Activated CD4-positive, alpha-beta memory T cell treated with anti-CD3 and anti-CD28 coated beads for 36 hours (primary cell): ENCODE measurements at regions of chr6 and their contacts with region 1.

Region 1: DNA sequence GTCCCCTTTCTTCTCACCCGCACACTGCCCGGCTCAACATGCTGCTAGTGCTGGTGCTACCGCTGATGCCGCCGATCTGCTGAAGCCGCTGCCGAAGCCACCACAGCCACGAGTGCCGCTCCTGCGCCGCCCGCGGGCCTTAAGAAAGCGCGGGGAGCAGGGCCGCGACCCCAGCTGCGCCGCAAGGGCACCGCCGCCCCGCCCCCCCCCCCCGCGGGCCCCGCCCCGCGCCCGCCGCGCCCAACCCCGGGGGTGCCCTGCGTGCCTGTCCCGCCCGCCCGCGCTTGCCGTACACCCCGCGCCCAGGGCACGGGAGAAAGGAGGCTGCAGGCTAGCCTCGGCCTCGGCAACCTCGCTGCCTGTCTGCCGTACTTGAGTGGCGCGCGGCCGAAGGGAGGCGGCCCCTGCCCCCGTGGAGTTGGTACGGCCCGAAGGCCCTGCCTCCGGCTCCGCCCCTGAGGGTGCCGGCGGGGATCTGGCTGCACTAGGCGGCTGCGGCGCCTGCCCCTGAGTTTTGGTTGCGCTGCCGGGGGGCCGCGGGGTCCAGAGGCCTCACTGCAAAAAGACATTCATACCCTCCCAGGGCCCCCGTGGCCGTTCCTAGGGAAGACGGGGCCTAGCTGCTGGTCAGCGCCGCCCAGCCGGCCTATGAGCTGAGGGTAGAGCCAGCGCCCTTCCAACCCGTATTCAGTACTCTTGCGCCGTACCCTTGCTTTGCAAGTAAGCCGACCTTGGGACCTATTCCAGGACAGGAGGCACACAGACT is at the start of gene SOD2:
- DNase-seq: peak; percentile 88
- H3K4me3 Mint-ChIP-seq: peak within 1 kb of the TSS; percentile 94
- H3K27ac Mint-ChIP-seq: peak within 1 kb of the TSS; percentile 93
- H3K4me1 Mint-ChIP-seq: peaks cover 38% of the 10 kb centered on the region
- H3K27me3 Mint-ChIP-seq: no peaks in the 10 kb centered on the region
- total RNA-seq, gene SOD2: 103 to 108 TPM

Region 2: DNA sequence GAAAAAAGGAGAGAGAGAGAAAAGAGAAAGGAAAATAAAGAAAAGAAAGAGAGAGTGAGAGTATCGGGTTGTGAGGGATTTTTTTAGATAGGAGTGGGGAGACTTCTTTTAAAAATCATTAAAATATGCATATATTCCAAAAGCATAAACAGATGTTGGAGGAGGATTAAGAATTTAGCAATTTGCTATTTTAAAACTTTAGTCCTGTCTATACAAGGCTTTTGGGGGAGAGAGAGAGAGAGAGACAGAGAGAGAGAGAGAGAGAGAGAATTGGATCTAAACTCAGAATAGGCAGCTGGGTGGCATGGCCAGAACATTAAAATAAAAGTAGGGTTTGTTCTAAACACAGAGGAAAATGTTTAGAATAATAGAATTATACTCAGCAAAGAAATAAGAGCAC is 72.4 kb before region 1 on chr6:
- CTCF ChIA-PET with region 1: no interaction called
- POLR2A ChIA-PET with region 1: no interaction called
- intact Hi-C with region 1: no loop called
- DNase-seq: no peak
- H3K4me3 Mint-ChIP-seq: no peak overlapping the region
- H3K27ac Mint-ChIP-seq: no peak overlapping the region
- H3K4me1 Mint-ChIP-seq: no peaks in the 10 kb centered on the region
- H3K27me3 Mint-ChIP-seq: no peaks in the 10 kb centered on the region

Region 3: DNA sequence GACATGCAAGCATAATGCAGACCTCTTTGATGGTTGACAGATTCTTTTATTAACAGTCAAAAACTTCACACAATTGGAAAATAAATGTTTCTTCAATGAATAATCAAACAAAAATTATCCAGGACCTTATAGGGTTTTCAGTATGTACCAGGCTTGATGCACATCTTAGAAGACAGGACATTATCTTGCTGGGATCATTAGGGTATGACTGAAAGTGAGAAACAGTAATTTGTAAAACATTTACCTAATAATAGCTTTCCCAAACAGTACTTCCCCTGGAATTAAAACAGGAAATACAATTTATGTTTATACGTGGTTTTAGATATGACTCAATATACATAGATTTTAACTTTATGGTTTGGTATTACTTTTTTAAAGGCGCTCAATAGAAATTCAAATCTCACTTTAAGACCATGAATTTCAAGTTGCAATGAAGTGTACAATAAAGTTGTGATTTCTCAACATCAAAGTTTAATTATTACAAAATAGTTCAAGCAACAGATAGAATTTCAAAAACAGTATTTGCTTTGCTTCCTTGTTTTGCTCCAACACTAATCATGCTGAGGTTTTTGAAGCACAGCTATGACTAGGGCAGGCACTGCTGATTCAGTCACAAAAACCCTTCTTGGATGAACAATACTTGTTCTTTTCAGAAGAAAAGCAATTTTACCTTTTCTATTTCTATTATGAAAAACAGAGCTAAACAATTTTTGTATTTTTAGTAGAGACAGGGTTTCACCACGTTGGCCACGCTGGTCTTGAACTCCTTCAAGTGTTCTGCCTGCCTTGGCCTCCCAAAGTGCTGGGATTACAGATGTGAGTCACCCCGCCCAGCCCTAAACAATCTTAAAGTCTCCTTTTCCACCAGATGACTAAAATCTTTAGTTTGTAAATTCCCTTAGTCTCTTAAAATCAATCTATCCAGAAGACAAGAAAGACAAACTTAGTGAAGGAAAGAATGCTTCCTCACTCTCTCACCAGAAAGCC is 13.9 kb before region 1 on chr6:
- CTCF ChIA-PET with region 1: interaction called, 13 read pairs
- POLR2A ChIA-PET with region 1: interaction called, 9 read pairs
- intact Hi-C with region 1: loop called (anchors 1 kb)
- DNase-seq: peak; percentile 69
- H3K4me3 Mint-ChIP-seq: no peak overlapping the region
- H3K27ac Mint-ChIP-seq: peak overlapping the region; percentile 83
- H3K4me1 Mint-ChIP-seq: peaks cover 36% of the 10 kb centered on the region
- H3K27me3 Mint-ChIP-seq: no peaks in the 10 kb centered on the region

Region 4: DNA sequence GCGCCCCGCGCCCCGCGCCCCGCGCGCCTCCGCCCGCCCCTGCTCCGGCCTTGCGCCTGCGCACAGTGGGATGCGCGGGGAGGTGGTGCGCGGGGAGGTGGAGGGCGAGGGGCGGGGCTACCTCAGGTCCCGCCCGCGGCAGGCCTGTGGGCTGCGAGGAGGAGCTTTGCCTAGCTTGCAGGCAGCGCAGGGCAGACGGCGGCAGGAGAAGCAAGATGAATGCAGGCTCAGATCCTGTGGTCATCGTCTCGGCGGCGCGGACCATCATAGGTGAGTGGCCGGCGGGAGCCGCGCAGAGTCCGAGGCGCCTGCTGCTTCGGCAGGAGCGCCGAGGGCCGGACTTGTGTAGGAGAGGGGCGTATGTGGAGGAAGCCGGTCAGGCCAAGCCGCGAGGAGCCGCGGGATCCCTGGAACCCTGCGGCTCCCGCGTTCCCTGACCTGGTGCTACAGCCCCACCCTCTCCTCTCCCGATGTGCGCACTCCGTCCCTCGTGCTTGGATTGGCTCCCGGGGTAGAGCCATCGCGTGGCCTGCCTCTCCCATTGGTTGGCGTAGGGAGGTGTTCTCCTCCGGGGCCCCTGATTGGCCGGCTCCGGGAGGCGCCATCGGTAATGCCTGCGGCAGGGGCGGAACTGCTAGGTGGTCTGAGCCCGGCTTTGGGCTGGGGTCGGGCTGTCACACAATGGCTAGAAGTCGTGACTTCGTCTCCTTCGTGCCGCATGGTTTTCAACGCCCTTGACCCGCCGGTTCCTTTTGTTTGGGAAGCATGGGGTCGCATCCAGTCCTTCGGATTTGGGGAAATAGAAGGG is 68.8 kb after region 1 on chr6 and contains the start of gene ACAT2:
- CTCF ChIA-PET with region 1: interaction called, 5 read pairs
- POLR2A ChIA-PET with region 1: no interaction called
- intact Hi-C with region 1: loop called (anchors 1 kb)
- DNase-seq: peak; percentile 97
- H3K4me3 Mint-ChIP-seq: peak within 1 kb of the TSS; percentile 98
- H3K27ac Mint-ChIP-seq: peak within 1 kb of the TSS; percentile 98
- H3K4me1 Mint-ChIP-seq: peaks cover 45% of the 10 kb centered on the region
- H3K27me3 Mint-ChIP-seq: no peaks in the 10 kb centered on the region
- total RNA-seq, gene ACAT2: 115 to 116 TPM

Region 5: GRCh38 chr6:159862103-159862502 is 168.8 kb after region 1 on chr6:
- CTCF ChIA-PET with region 1: no interaction called
- POLR2A ChIA-PET with region 1: no interaction called
- intact Hi-C with region 1: loop called (anchors 1 kb)
- DNase-seq: no peak
- H3K4me3 Mint-ChIP-seq: no peak overlapping the region
- H3K27ac Mint-ChIP-seq: no peak overlapping the region
- H3K4me1 Mint-ChIP-seq: peaks cover 16% of the 10 kb centered on the region
- H3K27me3 Mint-ChIP-seq: peaks cover 7% of the 10 kb centered on the region

Region 6: DNA sequence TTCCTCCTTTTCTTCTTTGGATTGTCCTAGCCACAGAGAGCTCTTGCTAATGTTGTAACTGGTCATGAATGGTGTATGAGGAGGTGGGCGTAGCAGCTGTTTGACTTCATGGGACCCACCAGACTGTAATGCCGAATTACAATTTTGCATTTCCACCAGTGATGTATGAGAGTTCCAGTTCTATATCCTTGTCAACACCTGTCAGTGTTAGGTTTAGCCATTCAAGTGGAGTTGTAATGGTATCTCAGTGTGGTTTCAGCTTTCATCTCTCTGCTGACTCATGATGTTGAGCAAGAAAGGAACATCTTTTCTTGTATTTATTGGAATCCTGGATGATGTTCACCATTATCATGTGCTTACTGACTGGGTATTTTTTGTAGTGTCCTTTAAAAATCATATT is 280.6 kb after region 1 on chr6:
- CTCF ChIA-PET with region 1: no interaction called
- POLR2A ChIA-PET with region 1: interaction called, 3 read pairs
- intact Hi-C with region 1: loop called (anchors 2 kb)
- DNase-seq: peak; percentile 52
- H3K4me3 Mint-ChIP-seq: no peak overlapping the region
- H3K27ac Mint-ChIP-seq: peak overlapping the region; percentile 77
- H3K4me1 Mint-ChIP-seq: peaks cover 84% of the 10 kb centered on the region
- H3K27me3 Mint-ChIP-seq: no peaks in the 10 kb centered on the region